Naive thymus-derived CD4-positive, alpha-beta T cell (primary cell): ENCODE measurements at regions of chr5 and their contacts with region 1.

Region 1: GRCh38 chr5:14581333-14581890 is at the start of gene OTULINL:
- DNase-seq: peak; percentile 72 to 90 (median 86)
- ATAC-seq: peak; percentile 92
- H3K4me3 ChIP-seq: peak within 1 kb of the TSS; percentile 82
- H3K4me3 Mint-ChIP-seq: peak within 1 kb of the TSS; percentile 83 to 91 (median 88)
- H3K27ac ChIP-seq: peak within 1 kb of the TSS; percentile 75
- H3K27ac Mint-ChIP-seq: peak within 1 kb of the TSS; percentile 78 to 96 (median 89)
- H3K4me1 ChIP-seq: peaks cover 24 to 27% of the 10 kb centered on the region in 2 donors
- H3K4me1 Mint-ChIP-seq: peaks cover 30 to 51% (median 44%) of the 10 kb centered on the region in 7 donors
- H3K27me3 ChIP-seq: no peaks in the 10 kb centered on the region
- H3K27me3 Mint-ChIP-seq: peaks cover 0 to 27% (median 0%) of the 10 kb centered on the region in 5 donors
- total RNA-seq, gene OTULINL: 26.1 to 44.7 (median 32.4) TPM

Region 2: GRCh38 chr5:14142827-14143548 is 438.4 kb before region 1 on chr5 and contains the start of gene TRIO:
- CTCF ChIA-PET with region 1: no interaction called
- POLR2A ChIA-PET with region 1: no interaction called
- intact Hi-C with region 1: loop called (anchors 2 to 5 kb)
- DNase-seq: peak; percentile 59 to 87 (median 70)
- ATAC-seq: peak; percentile 76
- H3K4me3 ChIP-seq: peak within 1 kb of the TSS; percentile 65
- H3K4me3 Mint-ChIP-seq: peak within 1 kb of the TSS; percentile 78 to 91 (median 86)
- H3K27ac ChIP-seq: peak within 1 kb of the TSS; percentile 46
- H3K27ac Mint-ChIP-seq: peak within 1 kb of the TSS in 5 of 9 donors; percentile 20 to 80 (median 38)
- H3K4me1 ChIP-seq: peaks cover 6% of the 10 kb centered on the region in 2 donors
- H3K4me1 Mint-ChIP-seq: peaks cover 5 to 18% (median 14%) of the 10 kb centered on the region in 7 donors
- H3K27me3 ChIP-seq: peaks cover 3% of the 10 kb centered on the region in 2 donors
- H3K27me3 Mint-ChIP-seq: peaks cover 15 to 63% (median 35%) of the 10 kb centered on the region in 5 donors
- total RNA-seq, gene TRIO: 5.5 to 45.9 (median 8.5) TPM

Region 3: GRCh38 chr5:14364576-14365472 is 216.6 kb before region 1 on chr5:
- CTCF ChIA-PET with region 1: no interaction called
- POLR2A ChIA-PET with region 1: no interaction called
- intact Hi-C with region 1: loop called in 1 of 2 experiments (anchors 1 kb)
- DNase-seq: no peak
- ATAC-seq: no peak
- H3K4me3 ChIP-seq: no peak overlapping the region
- H3K4me3 Mint-ChIP-seq: peak overlapping the region in 1 of 10 donors; percentile 48
- H3K27ac ChIP-seq: no peak overlapping the region
- H3K27ac Mint-ChIP-seq: peak overlapping the region in 4 of 9 donors; percentile 13 to 73 (median 46)
- H3K4me1 ChIP-seq: peaks cover 9 to 12% of the 10 kb centered on the region in 2 donors
- H3K4me1 Mint-ChIP-seq: peaks cover 17 to 55% (median 28%) of the 10 kb centered on the region in 7 donors
- H3K27me3 ChIP-seq: no peaks in the 10 kb centered on the region
- H3K27me3 Mint-ChIP-seq: no peaks in the 10 kb centered on the region

Region 4: DNA sequence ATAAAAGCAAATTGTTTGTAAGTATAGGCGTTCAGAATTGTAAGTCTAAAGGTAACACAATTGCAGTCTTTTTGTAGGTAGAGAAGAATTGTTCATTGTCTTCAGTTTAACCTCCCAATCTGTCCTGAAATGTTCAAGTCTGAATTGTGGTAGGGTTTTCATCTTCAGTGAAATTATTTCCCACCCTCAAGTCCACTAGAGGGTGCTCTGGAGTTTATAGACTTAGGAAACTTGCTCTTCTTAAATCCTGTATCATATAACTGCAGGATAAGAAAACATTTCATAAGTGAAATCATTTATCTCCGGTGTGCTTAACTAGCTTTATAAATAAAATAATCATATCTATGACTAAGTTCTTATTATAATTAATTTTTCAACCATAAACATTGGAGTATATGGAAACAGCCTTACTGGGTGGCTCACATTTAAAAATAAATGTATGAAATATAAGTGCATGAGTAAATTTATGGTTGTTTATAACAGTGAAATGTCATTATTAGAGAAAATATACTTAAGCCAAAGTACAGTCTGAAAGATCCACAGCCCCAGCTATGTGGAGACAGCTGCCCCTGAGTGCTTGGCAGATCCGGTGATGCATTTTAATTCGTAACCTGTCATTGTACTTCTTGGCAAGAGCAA is 182.2 kb before region 1 on chr5:
- CTCF ChIA-PET with region 1: interaction called, 10 read pairs
- POLR2A ChIA-PET with region 1: no interaction called
- intact Hi-C with region 1: loop called (anchors 1 to 2 kb)
- DNase-seq: peak in 6 of 9 donors; percentile 26 to 67 (median 53)
- ATAC-seq: peak; percentile 72
- H3K4me3 ChIP-seq: no peak overlapping the region
- H3K4me3 Mint-ChIP-seq: no peak overlapping the region
- H3K27ac ChIP-seq: no peak overlapping the region
- H3K27ac Mint-ChIP-seq: peak overlapping the region in 1 of 9 donors; percentile 7
- H3K4me1 ChIP-seq: no peaks in the 10 kb centered on the region
- H3K4me1 Mint-ChIP-seq: peaks cover 0 to 47% (median 19%) of the 10 kb centered on the region in 7 donors
- H3K27me3 ChIP-seq: no peaks in the 10 kb centered on the region
- H3K27me3 Mint-ChIP-seq: peaks cover 0 to 2% (median 0%) of the 10 kb centered on the region in 5 donors

Region 5: DNA sequence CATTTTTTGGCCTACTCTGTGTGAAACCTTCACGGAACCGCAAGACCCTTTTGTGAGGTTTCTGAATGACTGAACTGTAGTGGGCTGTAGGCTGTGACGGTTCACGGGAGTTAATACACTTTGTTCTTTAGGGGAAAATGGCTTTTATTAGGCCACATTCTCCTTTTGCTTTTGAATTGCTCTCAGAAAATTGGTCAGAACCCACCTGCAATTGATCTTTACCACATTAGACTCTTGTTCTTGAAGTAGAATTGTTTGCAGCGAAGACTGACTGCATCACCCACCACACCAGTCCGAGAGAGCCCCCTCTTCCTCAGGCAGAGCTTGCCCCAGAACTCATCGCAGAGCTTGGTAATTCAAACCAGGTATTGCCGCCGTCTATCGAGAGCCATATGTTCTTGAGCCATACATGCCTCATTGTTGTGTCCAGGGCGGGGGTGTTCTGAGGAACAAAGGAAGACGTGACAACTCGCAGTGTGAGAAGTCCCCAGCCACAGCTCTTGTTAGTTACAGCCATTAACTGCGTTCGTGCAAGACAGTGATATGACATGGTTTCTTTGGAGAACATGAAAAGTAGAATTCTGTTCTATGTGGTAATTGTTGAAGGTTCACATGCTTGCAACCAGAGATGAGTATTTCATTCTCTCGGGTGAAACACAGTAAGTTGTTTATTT is 166.3 kb before region 1 on chr5:
- CTCF ChIA-PET with region 1: no interaction called
- POLR2A ChIA-PET with region 1: interaction called, 5 read pairs
- intact Hi-C with region 1: loop called (anchors 1 to 2 kb)
- DNase-seq: no peak
- ATAC-seq: no peak
- H3K4me3 ChIP-seq: peak overlapping the region; percentile 17
- H3K4me3 Mint-ChIP-seq: peak overlapping the region in 7 of 10 donors; percentile 57 to 87 (median 73)
- H3K27ac ChIP-seq: no peak overlapping the region
- H3K27ac Mint-ChIP-seq: peak overlapping the region; percentile 89 to 97 (median 94)
- H3K4me1 ChIP-seq: peaks cover 31 to 32% of the 10 kb centered on the region in 2 donors
- H3K4me1 Mint-ChIP-seq: peaks cover 26 to 52% (median 40%) of the 10 kb centered on the region in 7 donors
- H3K27me3 ChIP-seq: no peaks in the 10 kb centered on the region
- H3K27me3 Mint-ChIP-seq: no peaks in the 10 kb centered on the region

Region 6: DNA sequence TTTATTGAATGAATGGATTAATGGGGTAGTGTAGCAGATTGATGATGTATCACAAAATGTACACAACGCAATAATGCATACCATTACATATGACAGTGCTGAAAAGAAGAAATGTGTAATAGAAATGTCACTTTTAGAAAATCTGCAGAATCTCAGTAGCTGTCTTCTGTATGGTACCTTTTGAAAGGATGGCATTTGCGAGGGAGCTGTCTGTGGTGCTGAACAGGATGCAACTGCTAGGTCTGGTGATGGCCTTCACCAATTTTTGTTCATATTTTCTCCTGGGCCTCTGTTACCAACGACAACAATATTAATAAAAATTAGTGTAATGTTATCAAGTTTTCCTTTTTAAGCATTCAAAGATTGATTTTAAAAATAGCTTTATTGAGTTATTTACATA is 46.9 kb after region 1 on chr5:
- CTCF ChIA-PET with region 1: no interaction called
- POLR2A ChIA-PET with region 1: interaction called, 3 read pairs
- intact Hi-C with region 1: loop called in 1 of 2 experiments (anchors 5 kb)
- DNase-seq: peak in 8 of 9 donors; percentile 18 to 55 (median 38)
- ATAC-seq: peak; percentile 61
- H3K4me3 ChIP-seq: no peak overlapping the region
- H3K4me3 Mint-ChIP-seq: no peak overlapping the region
- H3K27ac ChIP-seq: no peak overlapping the region
- H3K27ac Mint-ChIP-seq: no peak overlapping the region
- H3K4me1 ChIP-seq: no peaks in the 10 kb centered on the region
- H3K4me1 Mint-ChIP-seq: peaks cover 0 to 2% (median 0%) of the 10 kb centered on the region in 7 donors
- H3K27me3 ChIP-seq: no peaks in the 10 kb centered on the region
- H3K27me3 Mint-ChIP-seq: peaks cover 0 to 4% (median 0%) of the 10 kb centered on the region in 5 donors

Region 7: DNA sequence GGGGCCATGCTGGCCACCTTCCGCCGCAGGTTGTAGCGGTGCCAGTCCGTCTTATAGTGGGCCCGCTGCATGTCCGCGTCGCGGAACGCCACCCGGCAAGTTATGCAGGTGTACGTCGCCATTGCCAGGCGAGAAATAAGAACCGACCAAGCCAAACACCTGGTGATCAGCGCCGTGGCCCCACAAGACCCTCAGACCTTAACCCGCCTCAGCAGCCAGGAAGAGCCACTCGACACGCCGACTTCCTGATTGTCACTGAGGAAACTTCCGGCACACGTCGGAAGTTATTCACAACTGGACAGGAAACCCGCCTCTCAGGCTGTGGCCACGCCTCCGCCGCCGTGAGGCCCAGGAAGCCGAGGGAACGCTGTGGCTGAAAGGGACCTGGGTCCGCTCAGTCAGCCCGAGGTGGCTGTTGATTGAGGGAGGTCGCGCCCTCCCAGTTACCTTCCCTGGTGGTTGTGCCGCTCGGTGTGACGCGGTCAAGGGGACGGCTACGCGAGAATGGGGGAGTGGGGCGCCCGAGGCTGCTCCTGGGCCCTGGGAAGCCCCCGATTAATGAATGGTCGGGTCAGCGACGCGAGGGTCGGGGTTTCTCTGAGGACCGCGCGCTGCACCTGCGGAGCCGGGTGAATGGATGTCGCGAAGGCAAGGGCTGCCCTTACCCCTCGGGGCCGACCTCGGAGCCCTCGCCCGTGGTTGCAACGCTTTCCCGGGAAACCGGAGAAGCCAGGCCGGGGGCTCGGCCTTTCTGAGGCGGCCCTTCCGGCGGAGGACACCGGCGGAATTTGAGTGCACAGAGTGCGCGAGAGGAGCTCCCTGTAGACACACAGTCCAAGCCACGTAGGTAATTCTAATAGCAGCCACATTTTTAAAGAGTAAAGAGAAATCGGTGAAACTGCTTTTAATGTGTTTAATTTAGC is 1884.4 kb after region 1 on chr5 and contains the start of gene ZNF622:
- CTCF ChIA-PET with region 1: no interaction called
- POLR2A ChIA-PET with region 1: no interaction called
- intact Hi-C with region 1: loop called in 1 of 2 experiments (anchors 1 kb)
- DNase-seq: peak; percentile 72 to 89 (median 86)
- ATAC-seq: peak; percentile 96
- H3K4me3 ChIP-seq: peak within 1 kb of the TSS; percentile 88
- H3K4me3 Mint-ChIP-seq: peak within 1 kb of the TSS; percentile 90 to 100 (median 97)
- H3K27ac ChIP-seq: peak within 1 kb of the TSS; percentile 87
- H3K27ac Mint-ChIP-seq: peak within 1 kb of the TSS; percentile 94 to 99 (median 97)
- H3K4me1 ChIP-seq: peaks cover 44 to 55% of the 10 kb centered on the region in 2 donors
- H3K4me1 Mint-ChIP-seq: peaks cover 61 to 98% (median 82%) of the 10 kb centered on the region in 7 donors
- H3K27me3 ChIP-seq: no peaks in the 10 kb centered on the region
- H3K27me3 Mint-ChIP-seq: no peaks in the 10 kb centered on the region
- total RNA-seq, gene ZNF622: 31.8 to 40.7 (median 36.0) TPM